Common myeloid progenitor, CD34-positive (primary cell): ENCODE measurements at regions of chr5 and their contacts with region 1.

Region 1: GRCh38 chr5:142713121-142713706 is 27.3 kb upstream of the FGF1 start:
- DNase-seq: peak; percentile 86 to 92 (median 92)
- H3K4me3 ChIP-seq: peak overlapping the region; percentile 36 to 83 (median 74)
- H3K27ac ChIP-seq: peak overlapping the region; percentile 10 to 62
- H3K4me1 ChIP-seq: peaks cover 0 to 16% (median 12%) of the 10 kb centered on the region in 4 experiments
- H3K27me3 ChIP-seq: no peaks in the 10 kb centered on the region

Region 2: GRCh38 chr5:142725231-142726187 is 12.3 kb after region 1 on chr5:
- CTCF ChIA-PET with region 1: interaction called, 37 read pairs
- POLR2A ChIA-PET with region 1: no interaction called
- DNase-seq: peak in 1 of 3 donors; percentile 32
- H3K4me3 ChIP-seq: no peak overlapping the region
- H3K27ac ChIP-seq: peak overlapping the region in 1 of 2 experiments; percentile 46
- H3K4me1 ChIP-seq: peaks cover 5 to 34% (median 30%) of the 10 kb centered on the region in 4 experiments
- H3K27me3 ChIP-seq: no peaks in the 10 kb centered on the region

Region 3: GRCh38 chr5:142769741-142770631 is 56.8 kb after region 1 on chr5 and contains the start of gene ARHGAP26:
- CTCF ChIA-PET with region 1: interaction called, 21 read pairs
- POLR2A ChIA-PET with region 1: no interaction called
- DNase-seq: peak; percentile 94 to 97 (median 96)
- H3K4me3 ChIP-seq: peak within 1 kb of the TSS; percentile 75 to 94 (median 92)
- H3K27ac ChIP-seq: peak within 1 kb of the TSS in 1 of 2 experiments; percentile 47
- H3K4me1 ChIP-seq: peaks cover 8 to 27% (median 21%) of the 10 kb centered on the region in 4 experiments
- H3K27me3 ChIP-seq: peaks cover 0 to 3% (median 0%) of the 10 kb centered on the region in 5 experiments

Region 4: DNA sequence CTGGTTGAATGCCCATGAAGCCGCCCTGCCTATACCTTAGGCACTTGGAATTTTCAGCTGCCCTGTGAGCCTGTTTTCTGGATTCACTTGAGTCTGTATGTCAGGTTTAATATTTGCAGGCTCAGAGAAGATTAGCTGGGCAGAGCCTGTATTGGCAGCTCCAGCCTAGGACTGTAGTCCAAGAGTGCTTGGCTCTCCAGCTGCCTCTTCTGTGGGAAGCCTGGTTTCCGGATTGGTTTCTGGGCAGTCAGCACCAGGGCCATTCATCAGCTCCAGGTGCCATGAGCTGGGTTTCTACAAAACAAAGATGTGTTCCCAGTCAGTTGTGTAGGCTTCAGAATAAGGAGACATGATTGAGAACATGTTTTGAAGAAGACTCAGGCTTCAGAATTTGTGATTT is 147.1 kb after region 1 on chr5:
- CTCF ChIA-PET with region 1: interaction called, 19 read pairs
- POLR2A ChIA-PET with region 1: interaction called, 4 read pairs
- DNase-seq: peak in 2 of 3 donors; percentile 26 to 38
- H3K4me3 ChIP-seq: no peak overlapping the region
- H3K27ac ChIP-seq: no peak overlapping the region
- H3K4me1 ChIP-seq: peaks cover 0 to 18% (median 8%) of the 10 kb centered on the region in 4 experiments
- H3K27me3 ChIP-seq: no peaks in the 10 kb centered on the region